ENCODE measurements at regions of chr3 and their contacts with region 1.

Region 1: DNA sequence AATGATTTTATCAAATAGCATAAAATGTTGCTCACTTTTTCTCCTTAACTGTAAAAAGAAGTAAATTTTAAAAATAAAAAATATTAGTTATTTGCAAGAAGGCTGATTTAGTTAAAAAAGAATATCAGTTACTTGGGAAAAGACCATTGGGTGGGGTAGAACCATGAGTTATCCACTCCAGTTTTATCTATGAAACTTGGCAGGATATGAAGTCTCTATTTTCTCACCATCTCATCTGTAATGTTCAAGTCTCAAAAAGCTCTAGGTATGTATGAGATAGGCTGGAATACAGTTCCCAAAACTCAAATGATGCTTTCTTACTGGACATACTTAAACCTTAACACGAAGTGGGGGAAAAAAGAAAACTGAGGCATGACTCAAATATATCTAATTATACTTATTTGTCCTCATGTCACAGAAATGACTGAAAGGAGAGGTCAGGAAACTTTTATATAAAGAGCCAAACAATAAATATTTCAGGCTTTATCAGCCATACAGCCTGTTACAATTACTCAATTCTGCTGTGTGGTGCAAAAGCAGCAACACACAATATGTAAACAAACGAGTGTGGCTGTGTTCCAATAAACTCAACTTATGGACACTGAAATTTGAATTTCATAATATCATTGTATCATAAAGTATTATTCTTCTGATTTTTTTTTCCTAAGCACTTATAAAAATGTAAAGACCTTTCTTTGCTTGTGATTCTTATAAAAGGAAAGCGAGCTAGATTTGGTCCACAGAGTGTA is 131.8 kb downstream of the TBL1XR1 start:
- DNase-seq: no peak
- ATAC-seq: no peak
- H3K4me3 ChIP-seq: no peak overlapping the region
- H3K4me3 Mint-ChIP-seq: no peak overlapping the region
- H3K27ac ChIP-seq: no peak overlapping the region
- H3K27ac Mint-ChIP-seq: peak overlapping the region in 2 of 9 donors; percentile 28 to 61
- H3K4me1 ChIP-seq: peaks cover 8 to 10% of the 10 kb centered on the region in 2 donors
- H3K4me1 Mint-ChIP-seq: peaks cover 22 to 87% (median 74%) of the 10 kb centered on the region in 7 donors
- H3K27me3 ChIP-seq: no peaks in the 10 kb centered on the region
- H3K27me3 Mint-ChIP-seq: no peaks in the 10 kb centered on the region

Region 2: DNA sequence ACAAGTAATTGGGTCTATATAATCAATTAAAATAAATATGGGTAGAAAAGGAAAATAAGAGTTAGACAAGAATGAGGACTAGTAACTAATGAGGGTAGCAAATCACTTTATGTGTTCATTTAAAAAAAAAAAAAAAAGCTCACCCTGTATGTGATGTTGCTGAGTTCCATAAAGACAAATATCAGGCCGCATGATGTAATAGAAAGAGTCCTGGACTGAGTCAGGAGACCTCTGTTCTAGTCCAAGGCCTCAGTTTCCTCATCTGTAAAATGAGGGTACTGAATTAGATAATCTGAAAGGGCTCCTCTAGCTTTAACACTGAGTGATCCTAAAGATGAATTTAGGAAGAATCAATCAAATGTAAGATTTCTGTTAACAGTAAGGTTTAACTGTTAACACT is 14.2 kb after region 1 on chr3:
- CTCF ChIA-PET with region 1: no interaction called
- POLR2A ChIA-PET with region 1: no interaction called
- intact Hi-C with region 1: loop called (anchors 2 kb)
- DNase-seq: no peak
- ATAC-seq: no peak
- H3K4me3 ChIP-seq: no peak overlapping the region
- H3K4me3 Mint-ChIP-seq: no peak overlapping the region
- H3K27ac ChIP-seq: no peak overlapping the region
- H3K27ac Mint-ChIP-seq: peak overlapping the region in 1 of 9 donors; percentile 42
- H3K4me1 ChIP-seq: peaks cover 0 to 3% of the 10 kb centered on the region in 2 donors
- H3K4me1 Mint-ChIP-seq: peaks cover 14 to 70% (median 49%) of the 10 kb centered on the region in 7 donors
- H3K27me3 ChIP-seq: no peaks in the 10 kb centered on the region
- H3K27me3 Mint-ChIP-seq: no peaks in the 10 kb centered on the region

Region 3: DNA sequence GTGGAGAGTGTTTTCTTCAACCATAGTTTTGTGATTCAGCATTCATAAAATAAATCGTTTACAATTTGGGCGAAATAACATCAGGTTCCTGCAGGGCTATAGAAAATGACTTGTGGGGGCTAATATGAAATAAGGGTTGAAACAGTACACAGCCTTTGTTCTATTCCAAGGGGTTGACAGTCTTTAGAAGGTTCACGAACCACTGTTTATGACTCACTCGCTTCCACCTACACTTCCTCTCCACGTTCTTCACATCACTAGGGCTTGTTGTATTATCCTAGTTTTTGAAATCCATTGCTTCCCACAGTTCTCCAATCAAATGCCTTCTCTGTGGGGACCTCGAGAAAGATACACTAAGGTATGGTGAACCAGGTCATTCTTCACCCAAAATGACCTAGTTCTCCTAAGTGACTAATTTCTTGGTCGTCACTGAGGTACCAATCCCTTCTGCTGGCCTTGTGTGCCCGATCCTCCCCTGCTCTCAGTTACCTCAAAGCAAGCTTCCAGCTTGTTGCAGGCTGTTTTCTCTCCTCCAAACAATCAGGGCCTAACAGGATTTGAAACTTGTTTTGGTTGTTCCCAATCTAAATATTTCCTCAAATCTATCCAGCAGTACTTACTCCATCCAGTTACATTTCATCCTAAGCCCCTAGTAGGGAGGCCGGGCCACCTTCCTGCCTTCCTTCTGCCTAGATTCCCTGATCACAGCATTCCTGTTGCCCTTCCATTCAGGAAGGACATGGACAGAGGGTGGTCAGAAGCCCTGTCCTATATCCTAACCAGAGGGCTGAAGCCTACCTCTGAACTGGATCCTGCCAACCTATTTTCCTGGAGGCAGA is 154.9 kb after region 1 on chr3:
- CTCF ChIA-PET with region 1: no interaction called
- POLR2A ChIA-PET with region 1: no interaction called
- intact Hi-C with region 1: no loop called
- DNase-seq: no peak
- ATAC-seq: no peak
- H3K4me3 ChIP-seq: no peak overlapping the region
- H3K4me3 Mint-ChIP-seq: peak overlapping the region in 1 of 10 donors; percentile 5
- H3K27ac ChIP-seq: no peak overlapping the region
- H3K27ac Mint-ChIP-seq: peak overlapping the region in 6 of 9 donors; percentile 6 to 68 (median 40)
- H3K4me1 ChIP-seq: peaks cover 0 to 20% of the 10 kb centered on the region in 2 donors
- H3K4me1 Mint-ChIP-seq: peaks cover 17 to 41% (median 32%) of the 10 kb centered on the region in 7 donors
- H3K27me3 ChIP-seq: no peaks in the 10 kb centered on the region
- H3K27me3 Mint-ChIP-seq: no peaks in the 10 kb centered on the region

Region 4: GRCh38 chr3:177525987-177526712 is 460.7 kb after region 1 on chr3:
- CTCF ChIA-PET with region 1: no interaction called
- POLR2A ChIA-PET with region 1: no interaction called
- intact Hi-C with region 1: no loop called
- DNase-seq: no peak
- ATAC-seq: no peak
- H3K4me3 ChIP-seq: no peak overlapping the region
- H3K4me3 Mint-ChIP-seq: no peak overlapping the region
- H3K27ac ChIP-seq: no peak overlapping the region
- H3K27ac Mint-ChIP-seq: peak overlapping the region in 1 of 9 donors; percentile 15
- H3K4me1 ChIP-seq: no peaks in the 10 kb centered on the region
- H3K4me1 Mint-ChIP-seq: peaks cover 8 to 45% (median 26%) of the 10 kb centered on the region in 7 donors
- H3K27me3 ChIP-seq: no peaks in the 10 kb centered on the region
- H3K27me3 Mint-ChIP-seq: no peaks in the 10 kb centered on the region